Naive thymus-derived CD4-positive, alpha-beta T cell (primary cell): ENCODE measurements at regions of chr6 and their contacts with region 1.

Region 1: DNA sequence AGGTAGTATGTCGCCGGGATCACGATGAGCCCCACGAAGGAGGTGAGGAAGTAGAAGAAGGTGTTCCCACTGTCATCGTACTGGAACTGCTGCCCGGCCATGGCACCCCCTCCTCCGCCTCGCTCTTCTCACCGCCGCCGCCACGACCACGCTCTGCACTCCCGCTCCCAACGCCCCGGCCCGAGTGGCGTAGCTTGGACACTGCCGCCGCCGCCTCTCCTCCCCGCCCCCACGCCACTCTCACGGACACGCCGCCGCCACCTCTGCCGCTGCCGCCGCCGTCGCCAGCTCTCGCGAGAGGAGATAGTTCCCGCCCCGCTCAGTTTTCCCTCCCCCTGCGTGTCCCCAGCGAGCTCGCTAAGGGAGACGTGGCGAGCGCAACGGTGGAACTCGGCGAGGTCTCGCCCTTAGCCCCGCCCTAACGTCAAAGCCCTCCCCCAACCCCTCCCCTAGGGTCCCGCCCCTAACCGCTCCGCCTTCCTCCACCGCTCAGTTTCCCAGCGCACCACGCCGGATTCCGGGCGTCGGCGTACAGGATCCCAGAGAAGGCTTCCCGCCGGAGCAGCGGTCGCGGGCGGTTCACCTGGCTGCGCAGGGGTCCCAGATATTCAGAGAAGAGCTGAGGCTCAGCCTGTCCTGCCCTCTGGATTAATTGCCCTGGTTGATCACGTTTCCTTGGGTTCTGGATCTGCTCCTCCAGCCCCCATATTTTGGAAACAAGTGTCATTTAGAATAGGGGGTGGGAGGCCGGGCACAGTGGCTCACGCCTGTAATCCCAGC is at the start of gene SEC63:
- DNase-seq: peak; percentile 92 to 97 (median 96)
- ATAC-seq: peak; percentile 100
- H3K4me3 ChIP-seq: peak within 1 kb of the TSS; percentile 96
- H3K4me3 Mint-ChIP-seq: peak within 1 kb of the TSS; percentile 94 to 100 (median 99)
- H3K27ac ChIP-seq: peak within 1 kb of the TSS; percentile 86
- H3K27ac Mint-ChIP-seq: peak within 1 kb of the TSS; percentile 80 to 98 (median 96)
- H3K4me1 ChIP-seq: peaks cover 15 to 17% of the 10 kb centered on the region in 2 donors
- H3K4me1 Mint-ChIP-seq: peaks cover 20 to 35% (median 29%) of the 10 kb centered on the region in 7 donors
- H3K27me3 ChIP-seq: no peaks in the 10 kb centered on the region
- H3K27me3 Mint-ChIP-seq: peaks cover 0 to 5% (median 0%) of the 10 kb centered on the region in 5 donors
- total RNA-seq, gene SEC63: 82.9 to 89.0 (median 86.0) TPM

Region 2: DNA sequence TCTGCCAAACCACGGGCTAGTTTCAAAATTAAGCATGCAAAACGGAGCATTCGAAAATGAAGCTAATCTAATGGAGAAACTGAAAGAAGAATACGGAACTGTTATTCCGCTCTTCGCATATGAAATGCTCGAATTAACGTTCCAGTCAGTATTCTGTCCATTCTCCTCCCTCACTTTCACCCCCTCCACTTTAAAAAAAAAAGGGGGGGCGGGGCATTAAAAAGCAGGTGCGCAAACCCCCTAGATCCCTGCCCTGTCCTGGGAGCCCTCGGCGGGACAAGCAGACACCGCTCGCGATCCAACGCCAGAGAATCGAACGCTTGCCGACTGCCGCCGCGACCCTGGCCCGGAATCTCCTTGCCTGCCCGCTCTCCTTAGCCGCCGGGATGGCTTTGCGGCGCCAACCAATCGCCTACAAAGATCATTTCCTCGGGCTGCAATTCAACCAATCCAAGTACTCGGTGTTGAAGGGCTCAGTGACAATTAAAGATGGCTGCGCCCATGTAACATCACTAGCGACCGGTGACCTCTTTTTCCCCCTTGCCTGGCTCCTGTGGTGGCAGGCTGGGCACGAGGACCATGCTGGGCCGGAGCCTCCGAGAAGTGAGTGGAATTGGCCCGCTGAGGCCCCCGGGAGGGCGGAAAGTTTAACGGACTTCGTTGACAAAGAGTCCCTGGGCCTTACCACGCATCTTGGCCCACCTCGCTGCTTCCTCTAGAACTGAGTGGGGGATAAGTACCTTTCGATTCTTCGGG is 1328.8 kb before region 1 on chr6 and contains the starts of genes QRSL1 and RTN4IP1:
- CTCF ChIA-PET with region 1: no interaction called
- POLR2A ChIA-PET with region 1: no interaction called
- intact Hi-C with region 1: loop called in 1 of 2 experiments (anchors 1 kb)
- DNase-seq: peak; percentile 67 to 94 (median 90)
- ATAC-seq: peak; percentile 98
- H3K4me3 ChIP-seq: peak within 1 kb of the TSS; percentile 87
- H3K4me3 Mint-ChIP-seq: peak within 1 kb of the TSS; percentile 93 to 100 (median 98)
- H3K27ac ChIP-seq: peak within 1 kb of the TSS; percentile 94
- H3K27ac Mint-ChIP-seq: peak within 1 kb of the TSS; percentile 96 to 99 (median 98)
- H3K4me1 ChIP-seq: peaks cover 7 to 13% of the 10 kb centered on the region in 2 donors
- H3K4me1 Mint-ChIP-seq: peaks cover 13 to 67% (median 38%) of the 10 kb centered on the region in 7 donors
- H3K27me3 ChIP-seq: no peaks in the 10 kb centered on the region
- H3K27me3 Mint-ChIP-seq: no peaks in the 10 kb centered on the region
- total RNA-seq, gene QRSL1: 8.0 to 14.8 (median 13.6) TPM
- total RNA-seq, gene RTN4IP1: 5.1 to 6.4 (median 5.6) TPM

Region 3: GRCh38 chr6:107674995-107675738 is 282.9 kb before region 1 on chr6:
- CTCF ChIA-PET with region 1: no interaction called
- POLR2A ChIA-PET with region 1: no interaction called
- intact Hi-C with region 1: loop called in 1 of 2 experiments (anchors 10 kb)
- DNase-seq: peak; percentile 77 to 90 (median 86)
- ATAC-seq: peak; percentile 97
- H3K4me3 ChIP-seq: peak overlapping the region; percentile 36
- H3K4me3 Mint-ChIP-seq: peak overlapping the region in 8 of 10 donors; percentile 49 to 83 (median 76)
- H3K27ac ChIP-seq: peak overlapping the region; percentile 71
- H3K27ac Mint-ChIP-seq: peak overlapping the region; percentile 74 to 96 (median 85)
- H3K4me1 ChIP-seq: peaks cover 0 to 10% of the 10 kb centered on the region in 2 donors
- H3K4me1 Mint-ChIP-seq: peaks cover 0 to 17% (median 9%) of the 10 kb centered on the region in 7 donors
- H3K27me3 ChIP-seq: no peaks in the 10 kb centered on the region
- H3K27me3 Mint-ChIP-seq: peaks cover 0 to 15% (median 0%) of the 10 kb centered on the region in 5 donors

Region 4: GRCh38 chr6:107866606-107867301 is 91.3 kb before region 1 on chr6:
- CTCF ChIA-PET with region 1: no interaction called
- POLR2A ChIA-PET with region 1: no interaction called
- intact Hi-C with region 1: loop called in 1 of 2 experiments (anchors 5 kb)
- DNase-seq: peak in 7 of 9 donors; percentile 29 to 64 (median 52)
- ATAC-seq: peak; percentile 76
- H3K4me3 ChIP-seq: no peak overlapping the region
- H3K4me3 Mint-ChIP-seq: peak overlapping the region in 1 of 10 donors; percentile 32
- H3K27ac ChIP-seq: no peak overlapping the region
- H3K27ac Mint-ChIP-seq: peak overlapping the region in 3 of 9 donors; percentile 37 to 64 (median 45)
- H3K4me1 ChIP-seq: no peaks in the 10 kb centered on the region
- H3K4me1 Mint-ChIP-seq: peaks cover 0 to 10% (median 4%) of the 10 kb centered on the region in 7 donors
- H3K27me3 ChIP-seq: no peaks in the 10 kb centered on the region
- H3K27me3 Mint-ChIP-seq: peaks cover 0 to 10% (median 0%) of the 10 kb centered on the region in 5 donors

Region 5: GRCh38 chr6:107894821-107895396 is 63.2 kb before region 1 on chr6:
- CTCF ChIA-PET with region 1: no interaction called
- POLR2A ChIA-PET with region 1: no interaction called
- intact Hi-C with region 1: no loop called
- DNase-seq: no peak
- ATAC-seq: peak; percentile 29
- H3K4me3 ChIP-seq: no peak overlapping the region
- H3K4me3 Mint-ChIP-seq: no peak overlapping the region
- H3K27ac ChIP-seq: no peak overlapping the region
- H3K27ac Mint-ChIP-seq: peak overlapping the region in 3 of 9 donors; percentile 11 to 56 (median 39)
- H3K4me1 ChIP-seq: no peaks in the 10 kb centered on the region
- H3K4me1 Mint-ChIP-seq: peaks cover 0 to 10% (median 7%) of the 10 kb centered on the region in 7 donors
- H3K27me3 ChIP-seq: no peaks in the 10 kb centered on the region
- H3K27me3 Mint-ChIP-seq: no peaks in the 10 kb centered on the region

Region 6: GRCh38 chr6:108074359-108075144 is 116.5 kb after region 1 on chr6 and contains the start of gene OSTM1:
- CTCF ChIA-PET with region 1: no interaction called
- POLR2A ChIA-PET with region 1: no interaction called
- intact Hi-C with region 1: loop called (anchors 1 kb)
- DNase-seq: peak; percentile 88 to 98 (median 94)
- ATAC-seq: peak; percentile 99
- H3K4me3 ChIP-seq: peak within 1 kb of the TSS; percentile 99
- H3K4me3 Mint-ChIP-seq: peak within 1 kb of the TSS; percentile 84 to 94 (median 90)
- H3K27ac ChIP-seq: peak within 1 kb of the TSS; percentile 89
- H3K27ac Mint-ChIP-seq: peak within 1 kb of the TSS; percentile 81 to 98 (median 91)
- H3K4me1 ChIP-seq: peaks cover 18% of the 10 kb centered on the region in 2 donors
- H3K4me1 Mint-ChIP-seq: peaks cover 11 to 35% (median 23%) of the 10 kb centered on the region in 7 donors
- H3K27me3 ChIP-seq: no peaks in the 10 kb centered on the region
- H3K27me3 Mint-ChIP-seq: peaks cover 0 to 25% (median 4%) of the 10 kb centered on the region in 5 donors
- total RNA-seq, gene OSTM1: 25.0 to 48.9 (median 36.7) TPM

Region 7: GRCh38 chr6:108848116-108848868 is 890.2 kb after region 1 on chr6 and contains the start of gene ARMC2:
- CTCF ChIA-PET with region 1: no interaction called
- POLR2A ChIA-PET with region 1: no interaction called
- intact Hi-C with region 1: loop called in 1 of 2 experiments (anchors 5 kb)
- DNase-seq: peak; percentile 72 to 95 (median 79)
- ATAC-seq: peak; percentile 94
- H3K4me3 ChIP-seq: peak within 1 kb of the TSS; percentile 90
- H3K4me3 Mint-ChIP-seq: peak within 1 kb of the TSS; percentile 75 to 93 (median 88)
- H3K27ac ChIP-seq: peak within 1 kb of the TSS; percentile 69
- H3K27ac Mint-ChIP-seq: peak within 1 kb of the TSS; percentile 72 to 93 (median 85)
- H3K4me1 ChIP-seq: peaks cover 6 to 13% of the 10 kb centered on the region in 2 donors
- H3K4me1 Mint-ChIP-seq: peaks cover 11 to 39% (median 29%) of the 10 kb centered on the region in 7 donors
- H3K27me3 ChIP-seq: no peaks in the 10 kb centered on the region
- H3K27me3 Mint-ChIP-seq: peaks cover 0 to 36% (median 0%) of the 10 kb centered on the region in 5 donors
- total RNA-seq, gene ARMC2: 6.2 to 12.7 (median 7.9) TPM

Region 8: DNA sequence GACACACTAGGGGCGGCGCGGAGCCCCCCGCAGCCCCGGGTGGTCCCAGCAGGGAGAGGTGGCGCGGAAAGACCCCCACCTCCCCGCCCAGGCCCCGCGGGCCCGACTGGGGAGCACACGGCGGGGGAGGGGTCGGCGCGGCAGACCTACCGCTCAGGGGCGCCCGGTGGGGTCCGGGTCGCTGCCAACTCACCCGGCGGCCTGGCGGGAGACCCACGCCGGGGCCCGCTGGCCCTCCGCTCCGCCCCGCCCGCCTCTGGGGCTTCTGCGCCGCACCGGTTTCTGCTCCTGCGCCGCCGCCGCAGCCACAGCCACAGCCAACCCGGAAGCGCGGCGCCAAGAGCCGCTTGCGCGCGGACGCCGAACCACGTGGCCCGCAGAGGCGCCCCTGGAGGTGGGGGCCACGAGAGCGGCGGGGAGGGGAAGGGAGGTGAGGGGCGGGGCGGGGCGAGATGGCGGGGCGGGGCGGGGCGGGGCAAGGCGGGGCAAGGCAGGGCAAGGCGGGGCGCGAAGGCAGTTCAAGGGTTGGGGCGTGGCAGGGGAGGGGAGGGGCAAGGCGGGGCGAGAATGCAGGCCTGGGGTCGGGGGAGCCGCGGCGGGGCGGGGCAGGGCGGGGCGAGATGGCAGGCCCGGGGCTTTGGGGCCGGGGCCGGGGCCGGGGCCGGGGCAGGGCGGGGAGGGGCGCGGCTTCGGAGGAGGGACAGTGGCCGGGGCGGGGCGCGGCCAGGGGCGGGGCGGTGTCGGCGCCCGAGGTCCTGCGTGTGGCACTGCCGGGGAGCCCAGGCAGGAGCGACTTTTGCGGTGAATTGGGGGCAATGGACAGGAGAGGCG is 1525.0 kb after region 1 on chr6 and contains the start of gene ZBTB24:
- CTCF ChIA-PET with region 1: no interaction called
- POLR2A ChIA-PET with region 1: no interaction called
- intact Hi-C with region 1: loop called in 1 of 2 experiments (anchors 5 kb)
- DNase-seq: peak; percentile 86 to 92 (median 89)
- ATAC-seq: peak; percentile 94
- H3K4me3 ChIP-seq: peak within 1 kb of the TSS; percentile 79
- H3K4me3 Mint-ChIP-seq: peak within 1 kb of the TSS; percentile 92 to 99 (median 97)
- H3K27ac ChIP-seq: peak within 1 kb of the TSS; percentile 84
- H3K27ac Mint-ChIP-seq: peak within 1 kb of the TSS; percentile 42 to 95 (median 91)
- H3K4me1 ChIP-seq: peaks cover 38 to 39% of the 10 kb centered on the region in 2 donors
- H3K4me1 Mint-ChIP-seq: peaks cover 38 to 55% (median 51%) of the 10 kb centered on the region in 7 donors
- H3K27me3 ChIP-seq: no peaks in the 10 kb centered on the region
- H3K27me3 Mint-ChIP-seq: peaks cover 0 to 7% (median 0%) of the 10 kb centered on the region in 5 donors
- total RNA-seq, gene ZBTB24: 10.2 to 26.6 (median 23.4) TPM